Panc1 (cell line): ENCODE measurements at regions of chr7 and their contacts with region 1.

Region 1: GRCh38 chr7:4805110-4805983 is 29.9 kb downstream of the AP5Z1 start:
- DNase-seq: no peak
- ATAC-seq: peak; percentile 55
- H3K4me3 ChIP-seq: peak overlapping the region in 1 of 2 experiments; percentile 20; a peak in 1 of 4 replicates
- H3K27ac ChIP-seq: no peak overlapping the region
- H3K4me1 ChIP-seq: peaks cover 22% of the 10 kb centered on the region
- H3K27me3 ChIP-seq: no peaks in the 10 kb centered on the region
- CTCF ChIP-seq: no peak

Region 2: DNA sequence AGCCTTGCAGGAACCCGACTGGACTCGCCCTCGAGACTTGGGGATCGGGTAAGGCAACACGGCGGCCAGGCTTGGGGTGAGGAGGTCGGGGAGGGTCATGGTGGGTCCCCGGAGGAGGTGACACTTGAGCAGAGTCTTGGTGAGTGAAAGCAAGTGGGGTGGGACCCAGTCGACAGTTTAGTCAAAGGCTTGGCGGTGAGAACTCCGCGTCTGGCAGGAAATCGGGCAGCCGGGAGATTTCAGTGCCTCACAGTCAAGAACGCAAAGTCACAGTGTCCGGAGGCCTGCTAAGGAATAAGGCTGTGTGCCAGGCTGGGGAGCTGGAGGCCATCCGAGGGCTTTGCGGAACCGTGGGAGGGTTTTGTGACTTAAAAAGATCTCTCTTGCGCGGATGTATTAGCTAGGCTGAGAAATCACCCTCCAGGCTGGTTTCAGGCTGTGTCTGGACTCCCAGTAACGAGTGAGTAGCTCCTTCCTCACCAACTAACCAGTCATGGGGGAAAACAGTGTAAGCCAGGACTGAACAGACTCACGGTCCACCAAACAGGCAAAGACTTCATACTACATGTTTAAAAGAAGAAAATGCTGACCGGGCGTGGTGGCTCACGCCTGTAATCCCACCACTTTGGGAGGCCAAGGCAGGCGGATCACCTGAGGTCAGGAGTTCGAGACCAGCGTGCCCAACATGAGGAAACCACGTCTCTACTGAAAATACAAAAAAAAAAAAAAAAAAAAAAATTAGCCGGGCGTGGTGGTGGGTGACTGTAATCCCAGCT is 29.3 kb before region 1 on chr7:
- CTCF ChIA-PET with region 1: no interaction called
- POLR2A ChIA-PET with region 1: no interaction called
- in situ Hi-C with region 1: no loop called
- intact Hi-C with region 1: no loop called
- DNase-seq: no peak
- ATAC-seq: peak; percentile 26
- H3K4me3 ChIP-seq: peak overlapping the region; percentile 85 to 98
- H3K27ac ChIP-seq: peak overlapping the region; percentile 93
- H3K4me1 ChIP-seq: peaks cover 23% of the 10 kb centered on the region
- H3K27me3 ChIP-seq: no peaks in the 10 kb centered on the region
- CTCF ChIP-seq: no peak

Region 3: GRCh38 chr7:5077740-5078139 is 272.4 kb after region 1 on chr7:
- CTCF ChIA-PET with region 1: no interaction called
- POLR2A ChIA-PET with region 1: interaction called, 11 read pairs
- in situ Hi-C with region 1: no loop called
- intact Hi-C with region 1: no loop called
- DNase-seq: no peak
- ATAC-seq: peak; percentile 46; the same call in 1 of the 2 replicates
- H3K4me3 ChIP-seq: peak overlapping the region in 1 of 2 experiments; percentile 31; a peak in 2 of 4 replicates
- H3K27ac ChIP-seq: no peak overlapping the region
- H3K4me1 ChIP-seq: no peaks in the 10 kb centered on the region
- H3K27me3 ChIP-seq: no peaks in the 10 kb centered on the region
- CTCF ChIP-seq: no peak